HEK293 (cell line): ENCODE measurements at regions of chr17 and their contacts with region 1.

Region 1: GRCh38 chr17:6913608-6914443 is 82.0 kb upstream of the ALOX12 start:
- H3K4me3 ChIP-seq: no peak overlapping the region
- H3K27ac ChIP-seq: no peak overlapping the region
- H3K4me1 ChIP-seq: no peaks in the 10 kb centered on the region
- CTCF ChIP-seq: no peak

Region 2: GRCh38 chr17:6695565-6695964 is 218.3 kb before region 1 on chr17:
- CTCF ChIA-PET with region 1: no interaction called
- POLR2A ChIA-PET with region 1: no interaction called
- H3K4me3 ChIP-seq: no peak overlapping the region
- H3K27ac ChIP-seq: no peak overlapping the region
- H3K4me1 ChIP-seq: no peaks in the 10 kb centered on the region
- CTCF ChIP-seq: no peak

Region 3: GRCh38 chr17:6753006-6753445 is 160.8 kb before region 1 on chr17:
- CTCF ChIA-PET with region 1: no interaction called
- POLR2A ChIA-PET with region 1: no interaction called
- H3K4me3 ChIP-seq: no peak overlapping the region
- H3K27ac ChIP-seq: no peak overlapping the region; the same call in 1 of the 2 replicates
- H3K4me1 ChIP-seq: no peaks in the 10 kb centered on the region; the same call in 1 of the 2 replicates
- CTCF ChIP-seq: no peak

Region 4: DNA sequence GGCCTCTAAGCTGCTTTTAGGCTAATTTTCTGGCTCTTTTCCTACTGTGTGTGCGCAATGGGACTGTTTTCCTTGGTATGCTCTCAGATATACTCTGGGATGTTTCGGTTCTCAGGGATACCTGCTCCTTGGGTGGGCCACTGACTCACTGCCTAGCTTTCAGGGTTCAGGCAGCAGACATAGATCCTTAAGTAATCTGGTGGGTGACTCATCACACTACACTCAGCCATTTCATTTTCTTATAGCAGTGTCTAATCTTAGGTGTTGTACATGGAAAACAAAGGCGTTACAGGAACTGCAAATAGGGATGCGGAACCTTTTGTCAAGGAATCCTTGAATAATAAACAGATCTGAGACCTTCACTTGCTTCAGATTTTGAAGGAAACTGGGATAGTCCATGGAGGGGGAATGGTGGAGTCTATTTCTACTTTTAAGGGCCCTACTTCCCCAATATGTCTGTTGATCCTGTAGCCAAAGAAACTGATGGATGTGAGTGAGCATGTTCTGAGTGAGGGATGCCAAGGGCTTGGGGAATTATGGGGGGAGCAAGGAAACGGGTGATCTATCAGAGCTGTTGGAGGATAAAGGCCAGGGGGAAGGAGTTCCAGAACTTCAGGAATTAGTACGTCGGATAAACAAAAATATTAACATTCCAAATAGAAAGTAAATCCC is 41.6 kb before region 1 on chr17:
- CTCF ChIA-PET with region 1: interaction called, 12 read pairs
- POLR2A ChIA-PET with region 1: no interaction called
- H3K4me3 ChIP-seq: no peak overlapping the region
- H3K27ac ChIP-seq: no peak overlapping the region
- H3K4me1 ChIP-seq: no peaks in the 10 kb centered on the region
- CTCF ChIP-seq: no peak

Region 5: GRCh38 chr17:6894206-6894528 is 19.7 kb before region 1 on chr17:
- CTCF ChIA-PET with region 1: interaction called, 22 read pairs
- POLR2A ChIA-PET with region 1: no interaction called
- H3K4me3 ChIP-seq: no peak overlapping the region
- H3K27ac ChIP-seq: no peak overlapping the region
- H3K4me1 ChIP-seq: no peaks in the 10 kb centered on the region
- CTCF ChIP-seq: no peak

Region 6: GRCh38 chr17:6927290-6928126 is 13.7 kb after region 1 on chr17:
- CTCF ChIA-PET with region 1: interaction called, 22 read pairs
- POLR2A ChIA-PET with region 1: no interaction called
- H3K4me3 ChIP-seq: no peak overlapping the region
- H3K27ac ChIP-seq: no peak overlapping the region
- H3K4me1 ChIP-seq: no peaks in the 10 kb centered on the region
- CTCF ChIP-seq: no peak

Region 7: GRCh38 chr17:6969323-6969726 is 55.5 kb after region 1 on chr17:
- CTCF ChIA-PET with region 1: interaction called, 10 read pairs
- POLR2A ChIA-PET with region 1: no interaction called
- H3K4me3 ChIP-seq: no peak overlapping the region
- H3K27ac ChIP-seq: no peak overlapping the region
- H3K4me1 ChIP-seq: no peaks in the 10 kb centered on the region
- CTCF ChIP-seq: no peak

Region 8: GRCh38 chr17:7021993-7022778 is 108.4 kb after region 1 on chr17:
- CTCF ChIA-PET with region 1: interaction called, 19 read pairs
- POLR2A ChIA-PET with region 1: no interaction called
- H3K4me3 ChIP-seq: no peak overlapping the region
- H3K27ac ChIP-seq: no peak overlapping the region
- H3K4me1 ChIP-seq: peaks cover 3% of the 10 kb centered on the region; the same call in 1 of the 2 replicates
- CTCF ChIP-seq: peak; percentile 90